ENCODE measurements at regions of chr1 and their contacts with region 1.

Region 1: GRCh38 chr1:168875093-168875492 is 146.1 kb upstream of the DPT start:
- DNase-seq: peak; percentile 39 to 42
- H3K4me3 ChIP-seq: no peak overlapping the region
- H3K4me3 Mint-ChIP-seq: no peak overlapping the region
- H3K27ac Mint-ChIP-seq: peak overlapping the region; percentile 80
- H3K4me1 ChIP-seq: peaks cover 31% of the 10 kb centered on the region
- H3K4me1 Mint-ChIP-seq: peaks cover 50% of the 10 kb centered on the region
- H3K27me3 ChIP-seq: no peaks in the 10 kb centered on the region
- H3K27me3 Mint-ChIP-seq: no peaks in the 10 kb centered on the region
- CTCF ChIP-seq: no peak

Region 2: GRCh38 chr1:168803806-168804510 is 71.1 kb before region 1 on chr1:
- CTCF ChIA-PET with region 1: no interaction called
- POLR2A ChIA-PET with region 1: no interaction called
- intact Hi-C with region 1: loop called (anchors 1 kb)
- DNase-seq: no peak
- H3K4me3 ChIP-seq: no peak overlapping the region
- H3K4me3 Mint-ChIP-seq: peak overlapping the region; percentile 8
- H3K27ac Mint-ChIP-seq: peak overlapping the region; percentile 25
- H3K4me1 ChIP-seq: peaks cover 70% of the 10 kb centered on the region
- H3K4me1 Mint-ChIP-seq: peaks cover 47% of the 10 kb centered on the region
- H3K27me3 ChIP-seq: no peaks in the 10 kb centered on the region
- H3K27me3 Mint-ChIP-seq: no peaks in the 10 kb centered on the region
- CTCF ChIP-seq: no peak

Region 3: DNA sequence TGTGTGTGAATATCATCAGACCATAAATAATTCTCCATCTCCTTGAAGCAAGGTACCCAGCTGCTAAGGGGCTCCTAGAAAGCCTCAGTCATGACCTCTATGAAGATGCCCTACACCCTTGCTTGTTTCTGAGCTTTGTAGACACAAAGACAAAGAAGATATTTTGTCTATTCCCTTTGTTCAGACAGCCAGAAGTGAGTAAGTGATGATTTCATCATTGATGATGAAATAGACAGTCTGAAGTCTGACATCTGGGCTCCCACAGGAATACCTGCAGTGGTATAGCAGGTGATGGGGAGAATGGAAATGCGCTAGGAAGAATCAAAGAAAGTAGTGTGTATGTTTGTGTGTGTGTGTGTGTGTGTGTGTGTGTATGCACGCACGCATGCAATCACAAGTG is 63.9 kb before region 1 on chr1:
- CTCF ChIA-PET with region 1: no interaction called
- POLR2A ChIA-PET with region 1: no interaction called
- intact Hi-C with region 1: loop called (anchors 1 kb)
- DNase-seq: no peak
- H3K4me3 ChIP-seq: no peak overlapping the region
- H3K4me3 Mint-ChIP-seq: no peak overlapping the region
- H3K27ac Mint-ChIP-seq: peak overlapping the region; percentile 49
- H3K4me1 ChIP-seq: peaks cover 37% of the 10 kb centered on the region
- H3K4me1 Mint-ChIP-seq: peaks cover 28% of the 10 kb centered on the region
- H3K27me3 ChIP-seq: no peaks in the 10 kb centered on the region
- H3K27me3 Mint-ChIP-seq: no peaks in the 10 kb centered on the region
- CTCF ChIP-seq: no peak

Region 4: DNA sequence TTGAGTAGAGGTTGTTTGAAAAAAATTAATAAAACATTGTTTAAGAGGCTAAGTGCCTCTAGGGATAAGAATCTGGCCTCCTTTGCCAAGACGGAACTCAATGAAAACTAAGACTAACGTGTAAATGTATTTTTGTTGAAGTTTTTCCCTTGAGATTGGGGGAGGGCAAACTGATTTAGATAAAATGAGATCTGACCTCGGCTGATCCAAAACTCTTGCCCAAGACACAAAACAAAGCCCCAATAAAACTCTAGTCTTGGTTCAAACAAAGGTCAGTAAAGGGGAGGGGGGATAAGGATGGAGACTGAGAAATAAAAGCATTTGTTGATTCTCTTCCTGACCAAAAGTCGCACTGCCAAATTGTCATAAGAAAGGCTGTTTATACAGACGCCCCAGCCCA is 11.3 kb before region 1 on chr1:
- CTCF ChIA-PET with region 1: no interaction called
- POLR2A ChIA-PET with region 1: no interaction called
- intact Hi-C with region 1: loop called (anchors 1 kb)
- DNase-seq: no peak
- H3K4me3 ChIP-seq: no peak overlapping the region
- H3K4me3 Mint-ChIP-seq: no peak overlapping the region
- H3K27ac Mint-ChIP-seq: peak overlapping the region; percentile 48
- H3K4me1 ChIP-seq: peaks cover 25% of the 10 kb centered on the region
- H3K4me1 Mint-ChIP-seq: peaks cover 29% of the 10 kb centered on the region
- H3K27me3 ChIP-seq: no peaks in the 10 kb centered on the region
- H3K27me3 Mint-ChIP-seq: no peaks in the 10 kb centered on the region
- CTCF ChIP-seq: no peak

Region 5: DNA sequence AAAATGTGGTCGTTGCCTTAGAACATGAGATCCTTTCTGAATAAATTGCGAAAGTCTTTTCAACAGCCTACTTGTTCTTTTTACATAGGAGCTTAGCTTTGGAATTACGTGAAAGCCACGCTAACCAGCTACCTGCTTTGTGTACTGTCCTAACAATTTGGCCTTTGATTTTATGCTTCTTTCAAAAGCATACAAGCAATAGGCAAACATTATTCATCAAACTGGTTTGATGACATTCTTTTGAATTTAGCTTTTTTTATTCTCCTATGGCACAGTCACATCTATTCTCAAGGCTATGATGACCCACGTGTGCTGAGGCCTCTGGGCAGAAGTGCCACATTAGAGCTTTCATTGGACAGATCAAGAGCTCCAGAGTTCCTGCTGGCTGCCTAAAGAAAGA is 32.0 kb after region 1 on chr1:
- CTCF ChIA-PET with region 1: no interaction called
- POLR2A ChIA-PET with region 1: no interaction called
- intact Hi-C with region 1: loop called (anchors 1 kb)
- DNase-seq: peak; percentile 52 to 67
- H3K4me3 ChIP-seq: no peak overlapping the region
- H3K4me3 Mint-ChIP-seq: no peak overlapping the region
- H3K27ac Mint-ChIP-seq: peak overlapping the region; percentile 61
- H3K4me1 ChIP-seq: peaks cover 29% of the 10 kb centered on the region
- H3K4me1 Mint-ChIP-seq: peaks cover 26% of the 10 kb centered on the region
- H3K27me3 ChIP-seq: no peaks in the 10 kb centered on the region
- H3K27me3 Mint-ChIP-seq: no peaks in the 10 kb centered on the region
- CTCF ChIP-seq: no peak

Region 6: DNA sequence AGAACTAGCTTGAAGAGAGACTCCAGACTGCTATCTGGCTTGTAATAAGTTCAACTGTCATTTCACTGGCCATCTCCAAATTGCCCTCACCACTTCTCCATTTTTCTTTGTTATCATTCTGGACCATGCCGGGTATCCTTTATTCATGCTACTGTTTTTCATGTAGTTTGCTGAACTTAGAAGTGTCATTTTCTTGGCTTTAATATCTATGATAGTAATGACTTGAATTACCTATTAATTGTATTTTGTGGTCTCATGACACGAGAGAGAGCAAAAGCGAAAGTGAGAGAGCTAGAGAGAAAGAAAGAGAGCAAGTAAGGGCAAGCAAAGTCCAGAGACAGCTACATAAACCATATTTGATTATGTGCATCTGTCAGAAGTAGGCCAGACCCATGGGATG is 46.5 kb after region 1 on chr1:
- CTCF ChIA-PET with region 1: no interaction called
- POLR2A ChIA-PET with region 1: no interaction called
- intact Hi-C with region 1: no loop called
- DNase-seq: no peak
- H3K4me3 ChIP-seq: no peak overlapping the region
- H3K4me3 Mint-ChIP-seq: no peak overlapping the region
- H3K27ac Mint-ChIP-seq: peak overlapping the region; percentile 33
- H3K4me1 ChIP-seq: peaks cover 20% of the 10 kb centered on the region
- H3K4me1 Mint-ChIP-seq: peaks cover 25% of the 10 kb centered on the region
- H3K27me3 ChIP-seq: no peaks in the 10 kb centered on the region
- H3K27me3 Mint-ChIP-seq: no peaks in the 10 kb centered on the region
- CTCF ChIP-seq: no peak

Region 7: GRCh38 chr1:168960595-168960994 is 85.5 kb after region 1 on chr1:
- CTCF ChIA-PET with region 1: no interaction called
- POLR2A ChIA-PET with region 1: no interaction called
- intact Hi-C with region 1: loop called (anchors 1 kb)
- DNase-seq: peak in 1 of 2 experiments; percentile 7
- H3K4me3 ChIP-seq: no peak overlapping the region
- H3K4me3 Mint-ChIP-seq: no peak overlapping the region
- H3K27ac Mint-ChIP-seq: peak overlapping the region; percentile 52
- H3K4me1 ChIP-seq: peaks cover 18% of the 10 kb centered on the region
- H3K4me1 Mint-ChIP-seq: peaks cover 20% of the 10 kb centered on the region
- H3K27me3 ChIP-seq: no peaks in the 10 kb centered on the region
- H3K27me3 Mint-ChIP-seq: no peaks in the 10 kb centered on the region
- CTCF ChIP-seq: no peak

Measured in Caco-2 (cell line).